ENCODE measurements at regions of chr2 and their contacts with region 1.

Region 1: DNA sequence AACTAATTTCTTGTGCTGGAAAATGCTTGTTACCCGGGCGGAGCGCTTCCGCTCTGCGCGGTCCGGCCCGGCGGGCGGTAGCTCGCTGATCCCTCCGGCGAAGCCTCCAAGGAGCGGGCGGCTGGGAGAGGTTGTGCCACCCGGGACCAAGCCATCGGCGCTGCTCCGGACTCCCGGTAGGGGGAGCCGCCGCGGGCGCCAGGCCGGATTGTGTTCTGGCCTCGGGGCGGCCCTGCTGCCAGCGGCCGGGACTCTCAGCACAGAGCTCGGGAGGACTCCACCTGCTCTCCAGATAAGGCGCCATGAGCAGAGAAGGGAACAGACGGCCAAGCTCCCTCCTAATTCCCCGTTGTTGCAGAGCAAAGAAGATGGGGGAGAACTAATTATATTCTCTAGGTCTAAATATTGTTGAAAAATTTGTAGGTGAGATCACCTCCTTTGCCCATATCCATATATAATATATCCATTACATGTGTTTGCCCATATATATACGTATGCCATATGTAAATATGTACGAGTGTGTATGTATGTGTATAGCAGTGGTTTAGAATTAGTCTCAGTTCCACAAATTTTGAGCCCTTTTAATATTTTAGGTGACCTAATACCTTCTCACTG is 13.8 kb upstream of the SATB2 start:
- DNase-seq: no peak
- H3K4me3 Mint-ChIP-seq: no peak overlapping the region
- H3K27ac Mint-ChIP-seq: no peak overlapping the region
- H3K4me1 Mint-ChIP-seq: peaks cover 2% of the 10 kb centered on the region
- H3K27me3 Mint-ChIP-seq: peaks cover 84% of the 10 kb centered on the region

Region 2: GRCh38 chr2:199457147-199458008 is 14.2 kb before region 1 on chr2 and contains the start of gene SATB2:
- intact Hi-C with region 1: loop called (anchors 1 kb)
- DNase-seq: no peak
- H3K4me3 Mint-ChIP-seq: peak within 1 kb of the TSS; percentile 60
- H3K27ac Mint-ChIP-seq: no peak within 1 kb of the TSS
- H3K4me1 Mint-ChIP-seq: peaks cover 17% of the 10 kb centered on the region
- H3K27me3 Mint-ChIP-seq: peaks cover 60% of the 10 kb centered on the region
- total RNA-seq, gene SATB2: 0.05 TPM in 2 replicates

Region 3: DNA sequence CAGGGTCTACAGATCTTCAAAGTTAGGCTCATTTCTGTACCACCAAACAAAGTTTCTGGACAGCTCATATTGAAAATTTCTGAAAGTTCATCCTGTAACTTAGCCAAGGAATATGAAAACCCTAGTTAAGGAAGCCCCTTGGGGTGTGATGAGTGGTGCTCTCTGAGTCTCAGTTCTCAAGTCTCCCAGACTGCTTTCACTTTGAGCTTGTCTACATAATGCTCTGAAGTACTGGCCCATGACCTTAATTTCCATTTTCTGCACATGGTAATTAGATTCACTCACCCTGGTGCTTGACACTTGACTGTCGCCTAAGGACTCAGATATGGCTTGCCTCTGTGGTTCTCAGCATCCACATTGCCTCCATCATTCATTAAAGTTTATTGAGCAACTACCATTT is 37.9 kb after region 1 on chr2:
- intact Hi-C with region 1: no loop called
- DNase-seq: no peak
- H3K4me3 Mint-ChIP-seq: no peak overlapping the region
- H3K27ac Mint-ChIP-seq: no peak overlapping the region
- H3K4me1 Mint-ChIP-seq: no peaks in the 10 kb centered on the region
- H3K27me3 Mint-ChIP-seq: no peaks in the 10 kb centered on the region